K562 (cell line): ENCODE measurements at regions of chrX and their contacts with region 1.

Region 1: DNA sequence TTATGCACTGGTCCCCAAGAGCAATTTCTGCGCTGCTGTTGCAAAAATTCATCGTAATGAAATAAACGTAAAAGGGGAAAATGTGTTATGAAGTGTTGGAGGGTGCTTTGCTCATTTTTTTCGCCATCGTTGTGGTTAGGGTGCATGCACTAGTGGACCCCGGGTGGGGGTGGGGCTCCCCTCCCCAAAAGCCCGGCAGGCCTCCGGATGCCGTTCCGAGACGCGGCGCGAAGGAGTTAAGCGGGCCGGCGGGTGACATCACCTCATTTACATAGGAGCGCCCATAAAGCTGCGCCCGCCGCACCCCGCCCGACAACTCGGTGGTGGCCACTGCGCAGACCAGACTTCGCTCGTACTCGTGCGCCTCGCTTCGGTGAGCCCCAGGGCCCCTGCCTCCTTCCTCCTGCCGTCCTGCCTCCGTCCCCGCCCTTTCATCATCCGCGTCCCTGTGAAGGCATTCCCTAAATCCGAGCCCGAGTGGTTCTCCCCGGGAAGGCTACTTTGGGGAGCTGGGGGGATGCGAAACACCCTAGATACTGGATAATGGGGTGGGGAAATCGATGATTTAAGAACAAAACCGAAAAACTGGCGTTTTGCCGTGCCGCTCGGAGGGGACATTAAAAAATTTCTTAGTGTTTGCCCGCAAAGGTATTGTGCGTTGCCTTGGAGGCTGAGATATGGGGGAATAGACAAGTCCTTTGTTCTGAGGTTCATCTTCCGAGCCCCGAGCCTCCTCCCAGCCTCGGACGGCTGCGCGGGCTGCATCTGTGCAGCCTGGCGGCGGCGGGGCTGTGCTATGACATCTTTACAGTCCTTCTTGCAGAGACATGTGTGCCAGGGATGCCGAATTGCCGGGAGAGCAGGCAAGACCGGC is at the start of gene TMSB4X:
- DNase-seq: peak; percentile 69 to 91 (median 78)
- ATAC-seq: peak; percentile 86
- H3K4me3 ChIP-seq: peak within 1 kb of the TSS; percentile 97
- H3K27ac ChIP-seq: peak within 1 kb of the TSS; percentile 95
- H3K4me1 ChIP-seq: peaks cover 12 to 36% of the 10 kb centered on the region in 2 experiments; a peak in 4 of 5 replicates
- H3K27me3 ChIP-seq: no peaks in the 10 kb centered on the region
- CTCF ChIP-seq: peak in 1 of 3 experiments; percentile 27; a peak in 1 of 6 replicates
- EP300 ChIP-seq: no peak; the same call in 1 of the 2 replicates
- POLR2A ChIP-seq: peak; percentile 99
- RAD21 ChIP-seq: peak; percentile 5 to 18; a peak in 2 of 4 replicates
- polyA plus RNA-seq, gene TMSB4X: 1,688 to 2,035 TPM

Region 2: GRCh38 chrX:12946838-12947544 is 28.0 kb before region 1 on chrX:
- CTCF ChIA-PET with region 1: interaction called, 4 read pairs
- POLR2A ChIA-PET with region 1: interaction called, 18 read pairs
- in situ Hi-C with region 1: no loop called
- intact Hi-C with region 1: loop called (anchors 1 kb)
- DNase-seq: peak; percentile 70 to 89 (median 72)
- ATAC-seq: peak; percentile 79
- H3K4me3 ChIP-seq: no peak overlapping the region
- H3K27ac ChIP-seq: peak overlapping the region; percentile 79
- H3K4me1 ChIP-seq: peaks cover 5 to 55% of the 10 kb centered on the region in 2 experiments; a peak in 4 of 5 replicates
- H3K27me3 ChIP-seq: no peaks in the 10 kb centered on the region
- CTCF ChIP-seq: peak; percentile 97 to 100 (median 100)
- EP300 ChIP-seq: peak; percentile 46; the same call in 1 of the 2 replicates
- POLR2A ChIP-seq: no peak
- RAD21 ChIP-seq: peak; percentile 76 to 88

Region 3: DNA sequence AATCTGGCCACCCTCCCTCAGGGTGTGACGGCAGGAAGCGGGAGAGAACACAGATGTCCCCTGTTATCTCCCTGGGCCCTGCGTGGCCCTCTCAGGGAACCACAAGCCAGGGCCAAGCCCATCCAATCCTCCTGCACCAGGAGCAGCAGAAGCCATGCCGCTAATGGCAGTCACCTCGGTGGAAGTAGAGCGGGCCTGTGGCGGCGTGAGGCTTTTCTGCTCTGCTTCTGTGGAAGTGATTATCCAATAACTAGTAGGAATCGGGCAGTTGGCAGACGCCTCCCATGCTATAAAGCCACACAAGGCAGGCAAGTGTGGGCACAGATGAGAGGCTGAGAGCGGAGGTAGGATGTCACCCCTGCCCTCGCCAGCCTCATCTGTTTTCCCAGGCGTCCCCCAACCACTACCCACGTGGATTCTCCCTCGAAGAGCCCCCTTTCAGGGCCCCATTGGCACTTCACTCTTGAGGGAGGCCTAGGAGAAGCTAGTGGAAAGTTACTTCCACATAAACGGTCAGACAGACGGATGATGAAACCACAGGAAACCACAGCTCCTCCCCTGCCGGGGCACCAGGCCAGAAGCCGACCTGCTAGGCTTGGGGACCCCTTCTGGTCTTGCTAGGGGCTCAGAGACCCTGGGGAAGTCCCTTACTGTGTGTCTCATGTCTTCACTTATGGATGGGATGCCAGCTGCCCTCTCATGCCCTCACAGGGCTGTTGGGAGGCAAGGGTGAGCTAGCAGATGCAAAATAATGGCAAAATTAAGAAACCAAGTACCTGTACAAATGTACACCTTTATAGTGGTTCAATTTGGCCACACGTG is 18.9 kb before region 1 on chrX:
- CTCF ChIA-PET with region 1: no interaction called
- POLR2A ChIA-PET with region 1: interaction called, 31 read pairs
- in situ Hi-C with region 1: no loop called
- intact Hi-C with region 1: loop called (anchors 1 kb)
- DNase-seq: peak; percentile 42 to 83 (median 64)
- ATAC-seq: peak; percentile 86
- H3K4me3 ChIP-seq: peak overlapping the region; percentile 7; the same call in 1 of the 2 replicates
- H3K27ac ChIP-seq: peak overlapping the region; percentile 99
- H3K4me1 ChIP-seq: peaks cover 18 to 40% of the 10 kb centered on the region in 2 experiments
- H3K27me3 ChIP-seq: no peaks in the 10 kb centered on the region
- CTCF ChIP-seq: no peak
- EP300 ChIP-seq: peak; percentile 97
- POLR2A ChIP-seq: peak; percentile 51; the same call in 1 of the 2 replicates
- RAD21 ChIP-seq: peak in 1 of 2 experiments; percentile 22; a peak in 2 of 4 replicates

Region 4: DNA sequence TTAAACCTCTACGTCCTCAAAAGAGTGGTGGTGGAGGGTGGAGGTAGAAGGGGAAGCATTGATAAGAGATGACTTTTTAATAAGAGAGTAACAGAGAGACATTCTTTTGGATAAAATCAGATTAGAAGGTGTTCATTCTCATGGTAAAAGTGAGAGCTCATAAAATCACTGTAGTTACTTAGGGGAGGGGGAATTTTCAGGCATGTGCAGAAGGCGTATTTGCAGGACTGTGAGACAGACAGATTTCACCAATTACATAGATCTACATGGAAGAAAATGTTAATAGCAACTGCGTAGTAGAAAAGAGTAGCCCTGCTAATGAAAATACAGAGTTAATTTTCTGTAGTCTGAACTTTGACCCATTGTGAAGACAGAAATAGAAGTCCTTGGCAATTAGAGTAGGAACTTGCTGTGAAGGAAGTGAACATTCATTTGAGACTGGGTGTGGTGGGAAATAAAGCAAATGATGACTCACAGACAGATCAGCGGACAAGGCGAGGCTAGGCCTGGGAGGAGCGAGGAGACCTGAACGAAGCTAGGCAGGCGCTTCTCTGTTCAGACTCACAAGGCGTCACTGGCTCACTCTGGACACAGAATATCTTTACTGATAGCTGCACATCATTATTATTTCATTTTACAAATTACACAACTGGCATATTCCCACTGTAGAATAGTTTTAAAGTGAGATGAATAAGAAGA is 126.6 kb after region 1 on chrX:
- CTCF ChIA-PET with region 1: no interaction called
- POLR2A ChIA-PET with region 1: interaction called, 4 read pairs
- in situ Hi-C with region 1: no loop called
- intact Hi-C with region 1: loop called (anchors 5 kb)
- DNase-seq: peak; percentile 50 to 84 (median 66)
- ATAC-seq: peak; percentile 99
- H3K4me3 ChIP-seq: no peak overlapping the region
- H3K27ac ChIP-seq: peak overlapping the region; percentile 38; the same call in 2 of the 3 replicates
- H3K4me1 ChIP-seq: peaks cover 0 to 24% of the 10 kb centered on the region in 2 experiments; a peak in 4 of 5 replicates
- H3K27me3 ChIP-seq: no peaks in the 10 kb centered on the region
- CTCF ChIP-seq: no peak
- EP300 ChIP-seq: 0 out of 2 replicates have a peak, but pooled peaks have one; percentile 41
- POLR2A ChIP-seq: no peak
- RAD21 ChIP-seq: no peak

Region 5: DNA sequence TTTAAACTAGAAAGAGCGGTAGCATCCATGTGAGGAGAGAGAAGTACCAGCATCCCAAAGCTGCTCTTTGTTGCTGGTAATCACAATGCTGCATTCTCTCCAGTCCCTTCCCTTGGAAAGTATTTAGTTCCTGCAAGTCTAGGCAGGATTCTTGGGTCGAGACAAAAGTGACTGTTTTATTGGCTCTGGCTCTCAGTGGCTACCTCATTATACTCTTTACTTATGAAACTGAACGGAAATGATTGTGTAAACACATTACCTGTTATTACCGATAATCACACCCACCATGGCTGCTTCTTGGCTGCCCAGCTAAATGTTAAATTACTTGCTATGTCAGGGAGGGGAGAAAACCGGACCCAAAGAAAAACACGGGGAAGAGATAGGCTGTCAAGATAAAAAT is 318.7 kb after region 1 on chrX:
- CTCF ChIA-PET with region 1: no interaction called
- POLR2A ChIA-PET with region 1: interaction called, 9 read pairs
- in situ Hi-C with region 1: no loop called
- intact Hi-C with region 1: loop called (anchors 5 kb)
- DNase-seq: peak in 1 of 4 experiments; percentile 14
- ATAC-seq: peak; percentile 14
- H3K4me3 ChIP-seq: peak overlapping the region; percentile 40
- H3K27ac ChIP-seq: peak overlapping the region; percentile 57
- H3K4me1 ChIP-seq: peaks cover 0 to 12% of the 10 kb centered on the region in 2 experiments; a peak in 2 of 5 replicates
- H3K27me3 ChIP-seq: no peaks in the 10 kb centered on the region
- CTCF ChIP-seq: no peak
- EP300 ChIP-seq: no peak
- POLR2A ChIP-seq: no peak
- RAD21 ChIP-seq: no peak

Region 6: DNA sequence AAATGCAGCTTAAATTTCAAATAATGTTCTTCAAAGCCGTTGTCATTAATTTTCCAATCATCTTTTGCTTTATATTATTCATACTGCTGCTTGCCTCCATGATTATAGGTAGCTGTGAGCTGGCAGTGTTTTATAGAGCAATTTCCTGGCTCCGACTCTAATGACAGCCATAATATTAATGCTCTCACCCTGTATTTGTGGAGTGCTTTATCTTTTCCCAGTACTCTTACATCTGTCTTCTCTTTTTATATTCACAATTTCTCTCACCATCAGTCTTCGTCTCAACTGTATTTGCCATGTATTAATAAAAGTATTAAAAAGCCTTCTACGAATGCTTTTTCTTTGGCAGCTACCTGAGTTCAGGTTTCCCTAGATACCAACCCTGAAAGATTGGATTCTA is 323.8 kb after region 1 on chrX:
- CTCF ChIA-PET with region 1: no interaction called
- POLR2A ChIA-PET with region 1: interaction called, 12 read pairs
- in situ Hi-C with region 1: no loop called
- intact Hi-C with region 1: loop called (anchors 5 kb)
- DNase-seq: no peak
- ATAC-seq: no peak
- H3K4me3 ChIP-seq: no peak overlapping the region
- H3K27ac ChIP-seq: no peak overlapping the region; the same call in 2 of the 3 replicates
- H3K4me1 ChIP-seq: peaks cover 3 to 14% of the 10 kb centered on the region in 2 experiments; a peak in 3 of 5 replicates
- H3K27me3 ChIP-seq: no peaks in the 10 kb centered on the region
- CTCF ChIP-seq: no peak
- EP300 ChIP-seq: no peak
- POLR2A ChIP-seq: no peak
- RAD21 ChIP-seq: no peak

Region 7: GRCh38 chrX:13653022-13653693 is 678.1 kb after region 1 on chrX and contains the start of gene TCEANC:
- CTCF ChIA-PET with region 1: no interaction called
- POLR2A ChIA-PET with region 1: no interaction called
- in situ Hi-C with region 1: loop called (anchors 25 kb)
- intact Hi-C with region 1: no loop called
- DNase-seq: peak; percentile 92 to 97 (median 93)
- ATAC-seq: peak; percentile 97
- H3K4me3 ChIP-seq: peak within 1 kb of the TSS; percentile 67
- H3K27ac ChIP-seq: peak within 1 kb of the TSS; percentile 82
- H3K4me1 ChIP-seq: peaks cover 8 to 37% of the 10 kb centered on the region in 2 experiments
- H3K27me3 ChIP-seq: no peaks in the 10 kb centered on the region
- CTCF ChIP-seq: no peak
- EP300 ChIP-seq: no peak
- POLR2A ChIP-seq: peak; percentile 86
- RAD21 ChIP-seq: no peak
- polyA plus RNA-seq, gene TCEANC: 2.0 to 2.3 TPM